Vagina (tissue), 2 donors: ENCODE measurements at regions of chr10 and their contacts with region 1.

Region 1: DNA sequence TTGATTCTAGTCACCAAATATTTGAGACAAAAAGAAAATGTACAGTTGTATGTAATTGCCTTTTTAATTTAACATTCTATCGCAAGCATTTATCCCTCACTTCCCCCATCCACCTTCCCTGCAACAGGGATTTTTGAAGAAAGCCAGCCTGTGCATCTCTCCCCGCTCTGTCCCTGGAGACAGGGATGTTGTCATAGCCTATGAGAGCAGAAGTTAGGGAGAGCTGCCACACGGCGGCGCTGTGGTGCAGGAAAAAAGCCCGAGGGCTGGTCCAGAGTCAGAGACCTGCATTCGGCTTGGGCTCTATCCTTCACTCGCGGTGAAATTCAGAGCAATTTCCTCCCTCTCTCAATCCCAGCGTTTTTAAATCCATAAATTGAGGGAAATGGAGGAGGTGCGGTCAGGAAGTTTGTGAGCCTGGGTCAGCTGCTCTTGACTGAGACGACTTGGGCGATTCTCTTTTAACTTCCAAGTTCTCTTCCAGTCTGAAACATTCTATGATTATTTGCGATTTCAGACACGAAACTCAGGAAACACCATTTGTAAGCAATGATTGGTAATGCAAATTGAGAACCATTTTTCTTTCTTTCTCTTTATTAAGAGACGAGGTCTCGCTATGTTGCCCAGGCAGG is 17.5 kb downstream of the HKDC1 start:
- DNase-seq: no peak
- H3K4me3 ChIP-seq: no peak overlapping the region
- H3K27ac ChIP-seq: no peak overlapping the region
- H3K4me1 ChIP-seq: peaks cover 11% of the 10 kb centered on the region
- H3K27me3 ChIP-seq: no peaks in the 10 kb centered on the region
- CTCF ChIP-seq: peak; percentile 78 to 99 (median 97)
- POLR2A ChIP-seq: no peak

Region 2: DNA sequence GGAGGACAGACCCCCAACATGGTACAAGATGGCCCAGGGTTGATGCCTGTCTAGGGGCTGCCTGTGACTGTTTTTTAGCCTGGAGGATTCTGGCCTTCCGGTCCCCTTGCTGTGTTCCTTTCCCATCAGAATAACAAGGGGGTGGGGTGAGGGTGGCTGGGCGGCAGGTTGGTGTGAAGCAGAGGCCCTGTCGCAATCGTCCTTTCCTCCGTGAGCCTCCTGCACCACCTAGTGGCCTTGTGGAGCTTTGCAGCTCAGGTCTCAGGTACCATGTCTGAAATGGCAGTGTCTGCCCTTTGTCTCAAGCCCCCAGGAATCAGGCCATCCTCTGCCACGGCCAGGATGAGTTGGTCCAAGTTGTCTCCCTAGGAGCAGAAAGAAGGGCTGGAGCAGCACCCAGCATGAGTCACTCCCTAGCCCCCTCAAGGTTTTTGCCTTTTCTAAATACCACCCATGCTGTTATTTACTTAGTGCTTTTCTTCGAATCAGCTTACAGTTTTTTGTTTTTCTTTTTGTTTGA is 154.9 kb after region 1 on chr10:
- intact Hi-C with region 1: loop called (anchors 2 kb)
- DNase-seq: no peak
- H3K4me3 ChIP-seq: no peak overlapping the region
- H3K27ac ChIP-seq: peak overlapping the region; percentile 45
- H3K4me1 ChIP-seq: peaks cover 28% of the 10 kb centered on the region
- H3K27me3 ChIP-seq: no peaks in the 10 kb centered on the region
- CTCF ChIP-seq: peak; percentile 91 to 98 (median 97)
- POLR2A ChIP-seq: no peak